ENCODE measurements at regions of chr10 and their contacts with region 1.

Region 1: DNA sequence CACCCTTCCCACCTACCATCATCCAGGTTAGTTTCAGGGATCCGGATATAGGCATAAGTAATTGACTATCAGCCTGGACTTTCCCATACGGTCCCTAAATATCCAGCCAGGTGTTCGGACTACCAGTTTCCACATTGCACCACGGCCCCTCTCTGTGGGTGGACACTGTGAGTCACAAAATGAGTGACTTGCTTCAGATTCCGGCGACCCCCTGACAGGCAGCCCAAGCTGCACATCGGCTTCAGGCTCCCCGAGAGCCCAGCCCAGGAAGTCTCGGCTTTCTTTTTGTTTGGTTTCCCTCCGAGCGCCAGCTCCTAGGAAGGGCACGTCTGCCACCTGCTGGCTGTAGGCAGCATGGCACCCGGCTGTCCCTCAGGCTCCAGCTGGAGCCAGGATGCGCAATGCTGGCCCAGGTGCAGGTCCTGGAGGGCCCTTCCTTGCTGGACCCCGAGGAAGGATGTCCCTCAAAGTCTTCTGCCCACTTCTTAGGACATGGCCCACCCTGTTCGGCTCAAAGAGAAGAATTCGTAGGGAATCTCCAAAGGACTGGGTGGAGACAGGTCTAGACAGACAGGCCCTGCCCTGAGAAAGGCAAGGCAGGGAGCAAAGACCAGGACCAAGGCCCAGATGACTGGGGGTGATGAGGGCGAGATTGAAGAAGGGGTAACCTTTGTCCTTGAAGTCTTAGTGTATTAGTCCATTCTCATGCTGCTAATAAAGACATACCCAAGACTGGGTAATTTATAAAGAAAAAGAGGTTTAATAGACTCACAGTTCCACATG is 10.6 kb downstream of the HABP2 start:
- DNase-seq: peak; percentile 42 to 74 (median 59)
- ATAC-seq: peak; percentile 92
- H3K4me3 ChIP-seq: peak overlapping the region; percentile 18 to 20
- H3K4me3 Mint-ChIP-seq: peak overlapping the region; percentile 80
- H3K27ac ChIP-seq: no peak overlapping the region
- H3K27ac Mint-ChIP-seq: no peak overlapping the region
- H3K4me1 ChIP-seq: peaks cover 5% of the 10 kb centered on the region
- H3K4me1 Mint-ChIP-seq: peaks cover 4% of the 10 kb centered on the region
- H3K27me3 ChIP-seq: no peaks in the 10 kb centered on the region
- H3K27me3 Mint-ChIP-seq: peaks cover 5% of the 10 kb centered on the region
- CTCF ChIP-seq: peak; percentile 93

Region 2: GRCh38 chr10:112471878-112472487 is 1091.5 kb before region 1 on chr10:
- CTCF ChIA-PET with region 1: no interaction called
- POLR2A ChIA-PET with region 1: no interaction called
- intact Hi-C with region 1: loop called (anchors 5 to 10 kb)
- DNase-seq: peak in 2 of 9 experiments; percentile 54 to 66
- ATAC-seq: peak; percentile 81
- H3K4me3 ChIP-seq: no peak overlapping the region
- H3K4me3 Mint-ChIP-seq: no peak overlapping the region
- H3K27ac ChIP-seq: no peak overlapping the region
- H3K27ac Mint-ChIP-seq: no peak overlapping the region
- H3K4me1 ChIP-seq: no peaks in the 10 kb centered on the region
- H3K4me1 Mint-ChIP-seq: peaks cover 9% of the 10 kb centered on the region
- H3K27me3 ChIP-seq: no peaks in the 10 kb centered on the region
- H3K27me3 Mint-ChIP-seq: no peaks in the 10 kb centered on the region
- CTCF ChIP-seq: peak; percentile 84

Region 3: DNA sequence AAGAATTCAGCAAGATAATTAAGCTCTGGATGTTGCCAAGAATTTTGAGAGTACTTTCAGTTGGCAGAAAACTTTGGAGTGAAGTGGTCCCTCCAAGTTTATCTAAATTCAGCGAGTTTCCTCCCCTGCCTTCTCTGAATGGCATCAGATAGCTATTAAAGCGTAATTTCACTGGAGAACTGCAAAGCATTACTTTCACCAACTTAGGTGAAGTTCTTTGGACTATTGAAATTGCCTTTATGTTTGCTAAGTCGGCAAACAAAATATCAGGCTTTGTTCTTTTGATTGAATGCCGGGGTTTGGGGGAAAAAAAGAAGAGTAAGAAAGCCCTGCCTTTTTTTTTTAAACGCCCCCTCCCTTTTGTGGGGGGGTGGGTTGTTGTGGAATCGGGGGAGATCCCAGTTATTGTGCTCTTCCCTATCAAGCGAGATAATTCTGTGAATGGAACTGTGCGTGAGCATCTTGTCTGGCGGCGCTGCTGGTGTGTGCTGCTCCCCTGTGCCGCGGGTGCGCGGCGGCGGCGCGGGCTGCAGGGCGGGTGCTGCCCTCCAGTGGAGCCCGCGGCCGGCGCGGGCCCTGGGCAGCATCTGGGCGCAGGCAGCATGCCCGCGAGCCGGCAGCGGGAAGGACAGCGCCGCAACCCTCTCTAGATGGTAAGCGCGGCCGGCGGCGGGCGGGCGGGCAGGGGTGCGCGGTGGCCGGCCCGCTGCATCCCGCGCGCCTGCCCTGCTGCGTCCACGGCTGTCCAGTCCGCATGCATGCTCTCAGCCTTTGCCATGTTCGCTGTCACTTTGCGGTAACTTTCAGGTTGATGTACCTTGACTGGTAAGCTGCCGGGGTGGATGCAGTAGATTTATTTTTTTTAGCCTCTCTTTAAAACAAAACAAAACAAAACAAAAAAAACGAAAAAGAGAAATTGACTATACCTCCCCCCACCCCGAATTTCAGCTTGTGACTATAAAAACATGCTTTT is 437.0 kb before region 1 on chr10:
- CTCF ChIA-PET with region 1: no interaction called
- POLR2A ChIA-PET with region 1: no interaction called
- intact Hi-C with region 1: loop called in 1 of 2 experiments (anchors 5 kb)
- DNase-seq: peak; percentile 7 to 70 (median 45)
- ATAC-seq: peak; percentile 91
- H3K4me3 ChIP-seq: no peak overlapping the region
- H3K4me3 Mint-ChIP-seq: peak overlapping the region; percentile 57
- H3K27ac ChIP-seq: no peak overlapping the region
- H3K27ac Mint-ChIP-seq: no peak overlapping the region
- H3K4me1 ChIP-seq: peaks cover 5% of the 10 kb centered on the region
- H3K4me1 Mint-ChIP-seq: peaks cover 6% of the 10 kb centered on the region
- H3K27me3 ChIP-seq: peaks cover 0 to 2% of the 10 kb centered on the region in 2 experiments
- H3K27me3 Mint-ChIP-seq: peaks cover 25% of the 10 kb centered on the region
- CTCF ChIP-seq: peak; percentile 49